ENCODE measurements at regions of chr12 and their contacts with region 1.

Region 1: DNA sequence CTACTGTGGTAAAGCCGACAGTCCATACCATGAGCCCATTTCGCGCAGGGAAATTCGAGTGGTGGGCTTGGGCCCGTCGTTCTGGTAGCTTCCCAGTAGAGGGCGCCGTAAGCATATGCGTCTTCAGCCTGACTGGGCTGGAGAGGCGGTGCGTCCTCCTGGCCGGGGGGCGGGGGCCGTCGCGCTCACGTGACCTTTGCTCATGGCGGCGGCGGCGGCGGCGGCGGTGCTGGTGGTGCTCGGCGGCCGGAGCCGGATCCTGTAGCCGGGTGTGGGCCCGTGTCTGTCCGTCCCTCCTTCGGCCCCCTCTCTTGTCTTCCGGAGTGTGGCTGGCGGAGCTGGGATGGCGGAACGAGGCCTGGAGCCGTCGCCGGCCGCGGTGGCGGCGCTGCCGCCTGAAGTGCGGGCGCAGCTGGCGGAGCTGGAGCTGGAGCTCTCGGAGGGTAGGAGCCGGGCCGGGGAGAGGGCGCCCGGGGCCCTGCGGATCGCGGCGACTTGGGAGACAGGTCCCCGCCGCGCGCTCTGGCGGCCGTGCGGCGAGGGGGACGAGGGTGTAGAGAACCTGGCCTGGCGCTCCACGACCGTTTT is at the start of gene DIP2B:
- DNase-seq: peak; percentile 94
- H3K4me3 ChIP-seq: peak within 1 kb of the TSS; percentile 71 to 79
- H3K27ac ChIP-seq: peak within 1 kb of the TSS; percentile 92 to 95
- H3K4me1 ChIP-seq: peaks cover 5% of the 10 kb centered on the region
- H3K27me3 ChIP-seq: no peaks in the 10 kb centered on the region
- CTCF ChIP-seq: peak; percentile 90 to 98 (median 97)
- POLR2A ChIP-seq: peak; percentile 85
- total RNA-seq, gene DIP2B: 23.2 to 56.3 TPM

Region 2: GRCh38 chr12:50572271-50572670 is 67.4 kb after region 1 on chr12:
- intact Hi-C with region 1: loop called (anchors 10 kb)
- DNase-seq: peak; percentile 57
- H3K4me3 ChIP-seq: no peak overlapping the region
- H3K27ac ChIP-seq: peak overlapping the region; percentile 18 to 43
- H3K4me1 ChIP-seq: no peaks in the 10 kb centered on the region
- H3K27me3 ChIP-seq: no peaks in the 10 kb centered on the region
- CTCF ChIP-seq: no peak
- POLR2A ChIP-seq: no peak

Region 3: DNA sequence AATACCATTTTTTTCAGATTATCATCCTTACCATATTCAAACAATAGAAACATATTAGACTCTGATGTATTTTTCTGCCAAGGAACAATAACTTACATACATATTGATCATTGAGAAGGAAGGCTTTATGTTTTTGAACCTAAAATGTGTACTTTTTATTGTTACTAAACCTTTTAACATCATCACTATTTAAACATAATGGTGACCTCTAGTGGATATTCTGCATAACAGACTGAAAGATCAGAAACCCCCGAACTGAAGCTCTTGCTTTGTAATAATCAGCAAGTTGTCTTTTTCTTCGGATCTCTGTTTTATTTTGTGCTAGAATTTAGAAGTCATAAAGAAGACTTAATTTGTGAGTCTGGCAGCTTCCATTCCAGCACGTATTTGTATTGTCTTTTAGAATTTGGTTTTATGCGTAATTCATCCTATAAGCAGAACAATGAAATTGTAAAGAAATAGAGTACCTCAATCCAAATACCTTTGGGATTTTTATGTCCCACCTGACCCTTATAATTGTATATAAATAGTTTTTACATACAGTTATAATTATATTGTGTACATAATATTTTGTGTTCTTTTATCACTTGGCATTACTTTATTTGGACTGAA is 133.1 kb after region 1 on chr12:
- intact Hi-C with region 1: loop called (anchors 1 kb)
- DNase-seq: no peak
- H3K4me3 ChIP-seq: no peak overlapping the region
- H3K27ac ChIP-seq: no peak overlapping the region
- H3K4me1 ChIP-seq: no peaks in the 10 kb centered on the region
- H3K27me3 ChIP-seq: no peaks in the 10 kb centered on the region
- CTCF ChIP-seq: peak in 3 of 4 experiments; percentile 52 to 71 (median 68)
- POLR2A ChIP-seq: no peak

Region 4: DNA sequence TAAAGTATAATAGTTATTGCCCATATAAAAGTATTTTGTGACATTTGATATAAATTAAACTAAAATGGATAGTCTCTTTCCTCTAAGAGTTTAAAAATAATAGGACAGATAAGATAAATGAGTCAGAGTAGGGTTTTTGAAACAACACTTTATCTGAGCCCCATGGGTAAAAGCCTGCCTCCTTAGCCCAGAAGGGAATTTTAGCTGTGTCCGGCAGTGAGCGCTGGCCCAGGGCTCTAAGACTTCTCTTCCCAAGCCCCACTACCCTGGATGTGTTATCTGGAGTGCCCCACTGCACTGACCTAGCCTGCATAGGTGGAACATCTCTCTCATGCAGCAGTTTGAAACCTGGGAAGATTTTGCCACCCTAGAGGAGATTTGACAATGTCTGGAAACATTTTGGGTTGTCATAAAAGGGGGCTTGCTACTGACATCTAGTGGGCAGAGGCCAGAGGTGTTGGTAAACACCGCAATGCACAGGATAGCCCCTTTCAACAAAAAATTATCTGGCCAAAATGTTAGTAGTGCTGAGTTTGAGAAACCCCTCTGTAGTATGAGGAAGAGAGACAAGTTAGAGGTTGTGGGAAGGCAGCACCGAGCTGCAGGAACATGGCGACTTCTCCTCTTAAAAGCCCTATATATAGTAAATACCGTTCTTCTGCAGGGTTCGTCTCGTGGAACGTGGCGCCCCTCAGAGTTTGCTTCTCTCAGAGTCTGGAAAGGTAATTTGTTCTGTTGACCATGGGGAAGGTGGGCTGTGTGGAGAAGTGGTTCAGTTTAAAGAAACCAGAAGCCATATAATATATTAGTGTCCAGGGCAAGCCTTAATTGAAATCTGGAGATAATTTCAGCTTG is 229.7 kb after region 1 on chr12:
- intact Hi-C with region 1: loop called (anchors 5 kb)
- DNase-seq: no peak
- H3K4me3 ChIP-seq: no peak overlapping the region
- H3K27ac ChIP-seq: no peak overlapping the region
- H3K4me1 ChIP-seq: no peaks in the 10 kb centered on the region
- H3K27me3 ChIP-seq: no peaks in the 10 kb centered on the region
- CTCF ChIP-seq: peak in 3 of 4 experiments; percentile 44 to 53 (median 50)
- POLR2A ChIP-seq: no peak

Region 5: DNA sequence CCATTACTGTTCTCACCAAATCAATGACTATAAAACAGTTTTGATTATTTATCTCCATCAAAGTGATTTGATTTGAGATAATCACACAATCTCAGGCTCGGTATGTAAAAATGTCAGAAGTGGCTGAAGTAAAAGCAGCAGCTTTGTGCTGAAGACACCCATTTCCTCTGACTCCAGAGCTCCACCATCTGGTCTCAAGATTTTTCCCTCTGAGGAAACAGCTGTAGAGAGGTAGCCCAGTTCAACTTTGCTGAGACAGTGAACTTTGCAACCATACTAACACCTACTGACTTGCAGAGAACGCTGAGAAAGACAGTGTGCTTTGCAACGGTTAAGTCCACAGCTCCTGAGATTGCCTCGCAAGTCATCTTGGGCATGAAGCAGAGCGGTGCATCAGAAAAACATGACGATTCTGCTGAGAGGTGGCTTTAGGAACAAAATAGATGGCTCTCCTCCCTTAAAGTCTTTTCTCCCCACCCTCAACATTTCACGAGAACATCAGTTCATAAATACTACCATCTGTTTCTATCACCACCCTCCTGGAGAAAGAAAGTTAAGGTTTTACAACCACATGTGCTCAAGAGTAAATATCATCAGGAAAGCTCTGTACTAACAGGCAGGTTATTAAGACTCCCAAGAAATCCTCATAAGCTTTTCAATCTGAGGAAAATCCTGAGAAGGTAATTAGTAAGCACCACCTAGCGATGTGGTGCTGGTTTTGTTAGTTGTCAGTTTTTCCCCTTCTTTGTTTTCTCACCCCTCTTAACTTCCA is 482.3 kb after region 1 on chr12:
- intact Hi-C with region 1: loop called (anchors 5 kb)
- DNase-seq: peak; percentile 54
- H3K4me3 ChIP-seq: no peak overlapping the region
- H3K27ac ChIP-seq: peak overlapping the region in 1 of 2 donors; percentile 54
- H3K4me1 ChIP-seq: no peaks in the 10 kb centered on the region
- H3K27me3 ChIP-seq: no peaks in the 10 kb centered on the region
- CTCF ChIP-seq: peak in 2 of 4 experiments; percentile 52 to 60
- POLR2A ChIP-seq: no peak